K562 (cell line): ENCODE measurements at regions of chr22 and their contacts with region 1.

Region 1: DNA sequence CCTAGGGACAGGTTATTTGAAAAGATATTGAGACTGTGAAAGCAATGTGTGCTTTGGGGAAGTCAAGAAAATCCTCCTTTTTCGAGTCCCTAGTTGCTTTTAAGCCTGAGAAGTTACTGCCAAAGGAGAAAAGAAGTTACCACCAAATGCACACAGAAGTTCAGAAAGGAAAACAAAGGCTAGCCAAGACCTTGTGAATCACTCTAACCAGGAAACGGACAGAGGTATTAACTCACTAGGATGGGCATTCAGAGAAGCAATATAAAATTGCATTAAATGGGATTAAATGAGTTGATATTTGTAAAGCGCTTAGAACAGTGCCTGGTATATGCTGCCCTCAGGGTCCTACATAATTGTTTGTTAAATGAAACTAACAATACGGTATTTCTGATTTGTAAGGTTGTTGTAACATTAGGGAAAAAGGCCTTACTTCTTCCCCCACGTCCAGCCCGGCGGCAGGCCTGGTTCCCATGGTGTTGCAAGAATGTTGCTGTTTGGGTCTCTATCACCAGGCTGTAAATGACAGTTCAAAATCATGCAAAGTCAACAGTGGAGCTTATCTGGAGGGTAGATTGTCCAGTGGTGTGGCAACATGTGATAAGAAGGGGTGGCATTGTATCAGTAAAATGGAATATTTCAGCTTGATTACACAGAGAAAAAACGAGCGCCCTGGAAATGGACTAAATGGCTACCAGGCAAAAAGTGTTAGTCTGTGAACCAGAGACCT is 7.1 kb downstream of the TMA7B start:
- DNase-seq: peak in 1 of 4 experiments; percentile 44
- ATAC-seq: no peak; the same call in 2 of the 3 replicates
- H3K4me3 ChIP-seq: no peak overlapping the region
- H3K27ac ChIP-seq: peak overlapping the region; percentile 72
- H3K4me1 ChIP-seq: peaks cover 12 to 33% of the 10 kb centered on the region in 2 experiments
- H3K27me3 ChIP-seq: no peaks in the 10 kb centered on the region
- CTCF ChIP-seq: no peak
- EP300 ChIP-seq: peak; percentile 64; the same call in 1 of the 2 replicates
- POLR2A ChIP-seq: no peak
- RAD21 ChIP-seq: no peak

Region 2: DNA sequence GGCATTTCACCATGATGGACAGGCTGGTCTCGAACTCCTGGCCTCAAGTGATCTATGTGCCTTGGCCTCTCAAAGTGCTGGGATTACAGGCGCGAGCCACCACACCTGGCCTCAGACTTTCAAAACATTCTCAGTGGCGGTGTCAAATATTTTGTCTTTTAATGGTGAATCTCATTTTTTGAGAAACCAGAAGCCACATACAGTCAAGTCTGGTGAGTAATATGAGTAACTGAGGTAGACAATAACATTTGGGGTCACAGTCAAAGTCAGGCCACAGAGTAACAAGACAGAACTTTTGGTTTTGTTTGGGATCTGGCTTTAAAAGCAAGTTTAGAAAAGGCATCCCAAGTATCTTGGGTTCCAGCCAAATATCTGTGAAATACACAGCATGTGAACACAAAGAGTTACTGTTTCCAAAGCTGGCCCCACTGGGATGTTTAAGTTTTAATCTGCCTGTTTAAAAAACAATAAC is 12.6 kb before region 1 on chr22:
- CTCF ChIA-PET with region 1: no interaction called
- POLR2A ChIA-PET with region 1: interaction called, 12 read pairs
- in situ Hi-C with region 1: no loop called
- intact Hi-C with region 1: no loop called
- DNase-seq: no peak
- ATAC-seq: no peak
- H3K4me3 ChIP-seq: no peak overlapping the region
- H3K27ac ChIP-seq: no peak overlapping the region
- H3K4me1 ChIP-seq: peaks cover 16 to 52% of the 10 kb centered on the region in 2 experiments
- H3K27me3 ChIP-seq: no peaks in the 10 kb centered on the region
- CTCF ChIP-seq: no peak
- EP300 ChIP-seq: no peak
- POLR2A ChIP-seq: no peak
- RAD21 ChIP-seq: no peak

Region 3: GRCh38 chr22:40002935-40003715 is 35.9 kb after region 1 on chr22:
- CTCF ChIA-PET with region 1: no interaction called
- POLR2A ChIA-PET with region 1: no interaction called
- in situ Hi-C with region 1: no loop called
- intact Hi-C with region 1: no loop called
- DNase-seq: no peak
- ATAC-seq: no peak
- H3K4me3 ChIP-seq: no peak overlapping the region
- H3K27ac ChIP-seq: no peak overlapping the region
- H3K4me1 ChIP-seq: peaks cover 42 to 49% of the 10 kb centered on the region in 2 experiments
- H3K27me3 ChIP-seq: peaks cover 0 to 7% of the 10 kb centered on the region in 2 experiments; a peak in 1 of 5 replicates
- CTCF ChIP-seq: no peak
- EP300 ChIP-seq: no peak
- POLR2A ChIP-seq: no peak
- RAD21 ChIP-seq: no peak